ENCODE measurements at regions of chr3 and their contacts with region 1.

Region 1: GRCh38 chr3:187968883-187969580 is 184.9 kb upstream of the LPP start:
- DNase-seq: no peak
- H3K4me3 ChIP-seq: peak overlapping the region; percentile 41
- H3K27ac ChIP-seq: peak overlapping the region; percentile 99
- H3K4me1 ChIP-seq: peaks cover 99% of the 10 kb centered on the region
- CTCF ChIP-seq: no peak; the same call in 1 of the 2 replicates

Region 2: DNA sequence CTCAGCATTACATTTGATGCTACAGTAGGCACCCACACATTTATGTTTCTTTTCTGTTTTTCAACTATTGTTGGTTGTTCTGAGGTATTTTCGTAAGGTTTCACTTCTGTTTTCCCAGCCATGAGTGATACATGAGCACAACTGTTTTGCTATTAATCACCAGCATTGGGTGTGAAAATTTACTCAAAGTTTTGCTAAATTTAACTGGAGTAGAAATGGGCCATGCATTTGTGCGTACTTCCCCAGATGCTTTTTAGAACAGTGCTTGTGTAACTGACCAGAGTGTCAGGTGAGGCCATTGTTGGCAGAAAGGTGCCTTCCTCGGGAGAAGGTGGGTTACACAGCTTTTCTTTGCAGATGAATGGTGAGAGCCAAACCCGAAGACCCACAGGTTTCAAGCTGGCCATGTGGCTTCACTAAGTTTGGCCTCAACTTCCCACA is 968.3 kb before region 1 on chr3:
- CTCF ChIA-PET with region 1: no interaction called
- POLR2A ChIA-PET with region 1: interaction called, 3 read pairs
- intact Hi-C with region 1: loop called (anchors 5 kb)
- DNase-seq: peak; percentile 92
- H3K4me3 ChIP-seq: peak overlapping the region; percentile 77
- H3K27ac ChIP-seq: peak overlapping the region; percentile 98
- H3K4me1 ChIP-seq: peaks cover 72% of the 10 kb centered on the region
- CTCF ChIP-seq: no peak

Region 3: DNA sequence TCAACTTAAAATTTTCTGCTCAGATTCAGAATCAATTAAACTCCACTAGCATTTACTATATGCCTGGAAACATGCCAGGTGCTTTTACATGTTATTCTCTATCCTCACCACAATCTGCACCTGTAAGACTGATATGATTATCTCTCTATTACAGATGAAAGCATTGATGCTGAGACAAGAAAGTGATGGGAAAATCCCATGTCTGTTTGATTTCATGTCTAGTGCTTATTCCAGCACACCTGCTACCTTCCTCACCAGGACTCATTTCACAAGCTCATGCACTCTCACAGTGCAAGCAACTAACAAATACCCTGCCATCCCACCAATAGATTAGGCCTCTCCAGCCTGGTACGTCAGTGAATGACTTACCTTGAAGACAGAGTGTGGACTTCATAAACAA is 198.8 kb before region 1 on chr3:
- CTCF ChIA-PET with region 1: no interaction called
- POLR2A ChIA-PET with region 1: no interaction called
- intact Hi-C with region 1: no loop called
- DNase-seq: peak; percentile 24
- H3K4me3 ChIP-seq: no peak overlapping the region
- H3K27ac ChIP-seq: no peak overlapping the region
- H3K4me1 ChIP-seq: peaks cover 44% of the 10 kb centered on the region
- CTCF ChIP-seq: no peak

Region 4: DNA sequence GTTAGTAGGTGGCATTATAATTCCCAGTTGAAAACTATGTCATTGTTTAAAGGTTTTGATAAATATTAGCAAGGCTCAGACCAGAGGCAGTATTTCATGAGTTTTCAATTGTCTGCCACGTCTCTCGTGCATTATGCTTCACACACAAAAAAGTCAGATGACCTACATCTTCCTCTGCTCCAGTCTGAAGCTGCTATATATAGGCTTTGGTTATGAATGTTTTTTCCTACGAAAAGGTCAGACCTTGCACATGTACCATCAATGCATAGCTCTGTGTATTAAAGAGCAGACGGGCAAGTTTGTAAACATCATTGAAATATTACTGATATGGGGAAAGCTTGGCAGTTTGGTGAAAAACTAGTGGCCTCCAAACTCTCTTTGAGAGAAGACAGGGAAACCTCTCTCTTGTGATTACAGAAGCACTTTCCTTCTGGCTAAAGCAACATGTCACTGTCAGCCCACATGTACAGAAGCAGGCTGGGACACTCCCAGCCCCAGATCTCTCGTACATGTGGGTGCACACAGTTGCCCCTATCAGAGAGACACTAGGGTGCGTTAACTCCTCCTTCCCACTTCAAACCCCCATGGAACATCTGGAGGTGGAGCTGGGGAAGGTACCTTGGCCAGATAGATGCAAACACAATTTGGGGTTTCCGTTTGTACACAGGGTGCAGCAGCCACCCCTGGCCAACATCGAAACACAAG is 39.8 kb before region 1 on chr3:
- CTCF ChIA-PET with region 1: no interaction called
- POLR2A ChIA-PET with region 1: interaction called, 1,356 read pairs
- intact Hi-C with region 1: no loop called
- DNase-seq: no peak
- H3K4me3 ChIP-seq: no peak overlapping the region
- H3K27ac ChIP-seq: peak overlapping the region; percentile 4
- H3K4me1 ChIP-seq: peaks cover 89% of the 10 kb centered on the region
- CTCF ChIP-seq: no peak

Region 5: GRCh38 chr3:187955076-187955952 is 13.7 kb before region 1 on chr3:
- CTCF ChIA-PET with region 1: interaction called, 4 read pairs
- POLR2A ChIA-PET with region 1: interaction called, 1,356 read pairs
- intact Hi-C with region 1: no loop called
- DNase-seq: no peak
- H3K4me3 ChIP-seq: no peak overlapping the region
- H3K27ac ChIP-seq: peak overlapping the region; percentile 99
- H3K4me1 ChIP-seq: peaks cover 100% of the 10 kb centered on the region
- CTCF ChIP-seq: 0 out of 2 replicates have a peak, but pooled peaks have one; percentile 21

Region 6: GRCh38 chr3:188000361-188000861 is 31.4 kb after region 1 on chr3:
- CTCF ChIA-PET with region 1: no interaction called
- POLR2A ChIA-PET with region 1: interaction called, 11 read pairs
- intact Hi-C with region 1: no loop called
- DNase-seq: peak; percentile 82
- H3K4me3 ChIP-seq: peak overlapping the region; percentile 60
- H3K27ac ChIP-seq: peak overlapping the region; percentile 96
- H3K4me1 ChIP-seq: peaks cover 83% of the 10 kb centered on the region
- CTCF ChIP-seq: no peak